ENCODE measurements at regions of chr5 and their contacts with region 1.

Region 1: DNA sequence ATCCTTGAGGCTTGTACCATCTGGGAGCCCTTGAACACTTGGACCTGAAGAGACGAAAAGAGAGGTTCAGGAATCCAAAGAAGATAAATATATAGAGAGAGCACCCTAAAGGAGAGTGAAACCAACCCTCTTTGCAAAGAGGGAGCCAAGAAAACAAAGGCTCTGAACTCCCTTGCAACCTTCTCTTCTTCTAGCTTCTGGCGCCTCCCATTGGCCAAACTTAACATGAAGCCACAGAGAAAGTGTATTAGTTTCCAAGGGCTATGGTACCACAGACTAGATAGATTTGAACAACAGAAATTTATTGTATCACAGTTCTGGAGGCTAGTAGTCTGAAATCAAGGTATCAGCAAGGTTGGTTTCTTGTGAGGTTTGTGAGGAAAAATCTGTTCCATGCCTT is 175.1 kb downstream of the HCN1 start:
- DNase-seq: peak; percentile 52
- H3K4me3 ChIP-seq: no peak overlapping the region
- H3K27ac ChIP-seq: no peak overlapping the region
- H3K4me1 ChIP-seq: no peaks in the 10 kb centered on the region
- H3K27me3 ChIP-seq: no peaks in the 10 kb centered on the region
- CTCF ChIP-seq: peak; percentile 16 to 45 (median 34)
- EP300 ChIP-seq: no peak
- POLR2A ChIP-seq: no peak

Region 2: DNA sequence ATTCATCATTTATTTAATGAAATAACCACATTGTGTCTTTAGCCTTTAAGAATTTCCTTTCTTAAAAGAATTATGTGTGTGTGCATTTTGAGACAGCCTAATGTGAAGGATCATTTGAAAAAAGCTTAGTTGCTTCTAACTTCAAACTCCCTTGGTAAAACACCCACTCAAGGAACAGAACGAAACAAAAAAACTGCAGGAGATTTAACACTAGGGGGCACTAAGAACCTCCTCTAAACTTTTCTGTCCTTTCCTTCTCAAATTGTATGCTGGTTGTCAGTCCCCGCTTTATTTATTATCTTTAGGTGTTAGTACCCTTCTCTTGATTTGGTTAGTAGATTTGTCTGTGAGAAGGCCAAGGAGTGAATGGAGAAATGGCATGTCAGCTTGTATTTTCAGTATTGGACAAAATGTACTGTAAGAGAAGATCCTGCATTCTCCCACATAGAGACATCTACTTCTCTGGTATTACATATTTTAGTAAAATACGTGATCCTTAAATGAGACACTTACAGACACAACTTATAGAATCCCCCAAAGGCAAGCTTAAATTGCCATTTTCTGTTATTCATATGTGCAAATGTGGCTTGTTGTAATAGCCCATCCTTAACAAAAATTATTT is 482.6 kb before region 1 on chr5:
- in situ Hi-C with region 1: loop called in 2 of 4 experiments (anchors 25 kb)
- intact Hi-C with region 1: no loop called
- DNase-seq: no peak
- H3K4me3 ChIP-seq: no peak overlapping the region
- H3K27ac ChIP-seq: no peak overlapping the region
- H3K4me1 ChIP-seq: no peaks in the 10 kb centered on the region
- H3K27me3 ChIP-seq: no peaks in the 10 kb centered on the region
- CTCF ChIP-seq: peak; percentile 45 to 55 (median 52)
- EP300 ChIP-seq: no peak
- POLR2A ChIP-seq: no peak

Region 3: GRCh38 chr5:45060724-45061123 is 460.3 kb before region 1 on chr5:
- in situ Hi-C with region 1: loop called in 1 of 4 experiments (anchors 25 kb)
- intact Hi-C with region 1: no loop called
- DNase-seq: no peak
- H3K4me3 ChIP-seq: no peak overlapping the region
- H3K27ac ChIP-seq: no peak overlapping the region
- H3K4me1 ChIP-seq: no peaks in the 10 kb centered on the region
- H3K27me3 ChIP-seq: no peaks in the 10 kb centered on the region
- CTCF ChIP-seq: no peak
- EP300 ChIP-seq: no peak
- POLR2A ChIP-seq: no peak